Caco-2 (cell line): ENCODE measurements at regions of chr2 and their contacts with region 1.

Region 1: DNA sequence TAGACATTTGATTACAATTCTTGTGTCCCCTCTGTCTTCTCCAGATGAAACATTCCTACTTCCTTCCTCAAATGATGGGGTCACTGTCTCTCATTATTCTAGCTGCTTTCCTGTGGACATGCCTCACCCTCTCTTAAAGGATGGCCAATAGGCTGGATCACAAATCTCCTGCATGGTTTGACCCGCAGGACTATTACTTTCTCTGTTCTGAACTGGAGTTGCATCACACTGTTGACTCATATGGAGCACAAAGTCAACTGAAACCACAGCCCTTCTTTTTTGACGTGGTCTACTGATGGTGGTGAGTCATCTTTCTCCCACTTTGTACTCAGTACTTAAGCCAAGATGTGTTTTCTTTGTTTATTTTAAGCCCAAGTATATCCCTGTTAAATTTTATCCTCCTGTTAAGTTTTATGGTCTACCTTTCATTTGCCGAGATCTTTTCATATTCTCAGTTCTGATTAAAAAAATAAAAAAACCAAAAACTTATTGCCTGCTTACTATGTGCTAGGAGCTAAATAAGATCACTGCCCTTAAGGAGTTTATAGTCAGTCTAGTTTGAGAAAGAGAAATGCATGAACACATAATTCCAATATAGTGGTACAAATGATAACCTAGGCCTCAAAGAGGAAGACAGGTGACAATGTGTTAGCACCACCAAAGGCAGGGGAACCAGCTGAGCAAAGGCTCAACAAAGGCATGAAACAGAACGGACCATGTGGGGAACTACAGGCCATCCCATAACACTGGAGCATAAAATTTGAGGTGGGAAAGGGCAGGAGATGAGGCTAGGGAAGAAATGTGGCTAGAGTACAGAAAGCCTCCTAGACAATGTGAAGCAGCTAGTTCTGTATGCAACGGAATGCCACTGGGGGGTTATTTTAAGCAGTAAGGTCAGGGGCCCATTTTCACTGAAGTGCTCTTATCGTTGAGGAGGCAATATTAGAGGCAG is 67.6 kb upstream of the ZFP36L2 start:
- DNase-seq: peak; percentile 52 to 53
- H3K4me3 ChIP-seq: no peak overlapping the region
- H3K4me3 Mint-ChIP-seq: no peak overlapping the region
- H3K27ac Mint-ChIP-seq: peak overlapping the region; percentile 49
- H3K4me1 ChIP-seq: peaks cover 16% of the 10 kb centered on the region
- H3K4me1 Mint-ChIP-seq: peaks cover 16% of the 10 kb centered on the region
- H3K27me3 ChIP-seq: no peaks in the 10 kb centered on the region
- H3K27me3 Mint-ChIP-seq: no peaks in the 10 kb centered on the region
- CTCF ChIP-seq: no peak

Region 2: DNA sequence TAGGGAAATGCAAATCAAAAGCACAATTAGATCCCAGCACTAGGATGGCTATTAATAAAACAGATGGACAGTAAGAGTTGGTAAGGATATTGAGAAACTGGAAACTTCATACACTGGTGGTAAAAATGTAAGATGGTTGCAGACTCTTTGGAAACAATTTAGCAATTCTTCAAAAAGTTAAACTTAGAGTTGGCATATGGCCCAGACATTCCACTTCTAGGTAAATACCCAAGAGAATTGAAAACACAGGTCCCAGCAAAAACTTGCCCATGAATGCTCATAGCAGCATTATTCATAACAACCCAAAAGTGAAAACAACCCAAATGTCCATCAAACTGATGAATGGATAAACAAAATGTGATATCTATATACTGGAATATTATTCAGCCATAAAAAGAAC is 17.3 kb after region 1 on chr2:
- CTCF ChIA-PET with region 1: no interaction called
- POLR2A ChIA-PET with region 1: no interaction called
- intact Hi-C with region 1: loop called (anchors 2 kb)
- DNase-seq: no peak
- H3K4me3 ChIP-seq: no peak overlapping the region
- H3K4me3 Mint-ChIP-seq: no peak overlapping the region
- H3K27ac Mint-ChIP-seq: no peak overlapping the region
- H3K4me1 ChIP-seq: no peaks in the 10 kb centered on the region
- H3K4me1 Mint-ChIP-seq: no peaks in the 10 kb centered on the region
- H3K27me3 ChIP-seq: no peaks in the 10 kb centered on the region
- H3K27me3 Mint-ChIP-seq: no peaks in the 10 kb centered on the region
- CTCF ChIP-seq: no peak

Region 3: GRCh38 chr2:43333656-43334144 is 39.7 kb after region 1 on chr2:
- CTCF ChIA-PET with region 1: no interaction called
- POLR2A ChIA-PET with region 1: no interaction called
- intact Hi-C with region 1: no loop called
- DNase-seq: no peak
- H3K4me3 ChIP-seq: no peak overlapping the region
- H3K4me3 Mint-ChIP-seq: no peak overlapping the region
- H3K27ac Mint-ChIP-seq: no peak overlapping the region
- H3K4me1 ChIP-seq: no peaks in the 10 kb centered on the region
- H3K4me1 Mint-ChIP-seq: peaks cover 11% of the 10 kb centered on the region
- H3K27me3 ChIP-seq: no peaks in the 10 kb centered on the region
- H3K27me3 Mint-ChIP-seq: no peaks in the 10 kb centered on the region
- CTCF ChIP-seq: no peak